Esophagus muscularis mucosa (tissue), 4 donors: ENCODE measurements at regions of chrX and their contacts with region 1.

Region 1: DNA sequence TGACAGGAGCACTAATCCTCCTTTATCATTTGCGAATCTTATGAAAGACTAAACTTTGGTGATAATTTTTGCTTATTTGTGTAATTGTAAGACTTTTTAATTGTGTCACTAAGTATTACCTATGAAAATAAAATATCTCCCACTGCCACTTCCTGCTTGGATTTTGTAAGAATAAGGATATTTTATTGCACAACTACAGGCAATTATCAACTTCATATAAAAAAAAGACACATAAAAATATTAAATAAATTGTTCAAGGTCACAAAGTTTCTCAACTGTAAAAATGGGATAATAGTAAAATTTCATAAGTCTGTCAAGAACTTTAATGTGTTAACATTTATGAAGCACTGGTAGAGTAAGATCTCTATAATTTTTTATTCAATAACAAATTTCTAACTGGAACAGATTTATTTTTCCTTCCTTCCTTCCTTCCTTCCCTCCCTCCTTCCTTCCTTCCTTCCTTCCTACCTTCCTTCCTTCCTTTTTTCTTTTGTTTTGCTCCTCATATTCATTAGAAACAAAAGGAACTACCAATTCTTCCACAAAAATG is 527.6 kb upstream of the FAM47C start:
- DNase-seq: no peak
- H3K4me3 ChIP-seq: no peak overlapping the region
- H3K27ac ChIP-seq: no peak overlapping the region
- H3K4me1 ChIP-seq: no peaks in the 10 kb centered on the region
- H3K27me3 ChIP-seq: no peaks in the 10 kb centered on the region
- CTCF ChIP-seq: no peak
- EP300 ChIP-seq: no peak
- POLR2A ChIP-seq: no peak

Region 2: GRCh38 chrX:35244796-35245508 is 1235.6 kb before region 1 on chrX:
- intact Hi-C with region 1: no loop called
- DNase-seq: no peak
- H3K4me3 ChIP-seq: no peak overlapping the region
- H3K27ac ChIP-seq: no peak overlapping the region
- H3K4me1 ChIP-seq: no peaks in the 10 kb centered on the region
- H3K27me3 ChIP-seq: no peaks in the 10 kb centered on the region
- CTCF ChIP-seq: no peak
- EP300 ChIP-seq: no peak
- POLR2A ChIP-seq: no peak

Region 3: DNA sequence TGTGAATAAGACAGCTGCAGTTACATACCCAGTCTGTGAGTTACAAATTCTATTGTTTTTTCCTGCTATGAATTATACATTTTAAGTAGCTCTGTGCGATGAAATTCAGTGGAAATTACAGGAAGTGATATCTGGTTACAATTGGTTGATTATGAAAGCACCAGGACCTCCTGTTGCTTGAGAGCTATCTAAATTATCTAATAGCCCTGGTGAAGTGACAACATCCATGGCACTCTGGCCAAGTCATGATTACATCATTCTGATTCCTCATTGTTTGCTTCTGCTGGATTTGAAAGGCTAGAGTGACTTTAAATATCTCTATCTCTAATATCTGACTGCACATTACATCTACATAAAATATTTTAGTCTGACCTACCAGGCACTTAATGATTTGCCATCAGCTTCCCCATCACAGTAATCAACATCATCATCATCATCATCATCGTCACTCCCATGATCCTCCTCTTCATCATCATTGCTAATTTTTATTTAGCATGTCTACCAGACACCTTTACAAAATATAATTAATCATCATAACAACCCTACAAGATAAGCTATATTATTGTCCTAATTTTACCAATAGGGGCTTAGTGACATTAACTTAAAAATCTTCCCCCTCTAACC is 45.9 kb before region 1 on chrX:
- intact Hi-C with region 1: loop called (anchors 2 kb)
- DNase-seq: no peak
- H3K4me3 ChIP-seq: no peak overlapping the region
- H3K27ac ChIP-seq: no peak overlapping the region
- H3K4me1 ChIP-seq: no peaks in the 10 kb centered on the region
- H3K27me3 ChIP-seq: no peaks in the 10 kb centered on the region
- CTCF ChIP-seq: no peak
- EP300 ChIP-seq: no peak
- POLR2A ChIP-seq: no peak